PC-3 (cell line): ENCODE measurements at regions of chr4 and their contacts with region 1.

Region 1: DNA sequence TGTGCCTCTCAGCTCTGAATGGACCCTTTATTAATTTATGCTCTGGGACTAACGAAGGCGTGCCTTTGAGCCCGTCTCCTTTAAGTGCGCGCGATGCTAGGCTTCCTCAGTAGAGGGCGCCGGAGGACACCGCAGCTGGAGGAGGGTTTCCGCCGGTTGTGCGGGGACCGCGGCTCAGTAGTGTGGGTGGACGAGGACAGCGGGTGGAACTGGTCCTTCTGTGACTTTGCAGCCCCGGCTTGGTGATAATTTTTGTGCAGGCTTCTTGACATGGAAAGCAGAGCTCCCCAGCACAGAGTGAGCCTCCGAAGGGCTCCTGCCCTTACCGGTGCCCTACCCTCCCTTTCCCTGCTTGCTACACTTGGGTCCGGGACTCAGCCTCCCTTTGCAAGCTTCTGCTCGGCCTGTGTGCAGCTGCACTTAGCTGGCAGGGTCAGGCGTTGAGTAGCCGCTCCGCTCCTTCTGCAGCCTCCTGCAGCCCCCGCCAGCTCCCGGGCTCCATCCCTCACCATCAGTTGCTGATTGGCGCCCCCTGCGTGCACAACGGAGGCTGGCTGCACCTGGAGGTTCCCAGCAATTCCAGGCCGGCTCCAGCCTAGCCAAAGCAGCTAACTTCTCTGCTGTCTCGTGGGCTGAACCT is 26.8 kb upstream of the BOD1L1 start:
- DNase-seq: peak; percentile 77
- ATAC-seq: peak; percentile 86
- H3K4me3 ChIP-seq: peak overlapping the region; percentile 73
- H3K27ac ChIP-seq: peak overlapping the region; percentile 84
- H3K4me1 ChIP-seq: peaks cover 33% of the 10 kb centered on the region
- H3K27me3 ChIP-seq: no peaks in the 10 kb centered on the region
- CTCF ChIP-seq: peak; percentile 67

Region 2: DNA sequence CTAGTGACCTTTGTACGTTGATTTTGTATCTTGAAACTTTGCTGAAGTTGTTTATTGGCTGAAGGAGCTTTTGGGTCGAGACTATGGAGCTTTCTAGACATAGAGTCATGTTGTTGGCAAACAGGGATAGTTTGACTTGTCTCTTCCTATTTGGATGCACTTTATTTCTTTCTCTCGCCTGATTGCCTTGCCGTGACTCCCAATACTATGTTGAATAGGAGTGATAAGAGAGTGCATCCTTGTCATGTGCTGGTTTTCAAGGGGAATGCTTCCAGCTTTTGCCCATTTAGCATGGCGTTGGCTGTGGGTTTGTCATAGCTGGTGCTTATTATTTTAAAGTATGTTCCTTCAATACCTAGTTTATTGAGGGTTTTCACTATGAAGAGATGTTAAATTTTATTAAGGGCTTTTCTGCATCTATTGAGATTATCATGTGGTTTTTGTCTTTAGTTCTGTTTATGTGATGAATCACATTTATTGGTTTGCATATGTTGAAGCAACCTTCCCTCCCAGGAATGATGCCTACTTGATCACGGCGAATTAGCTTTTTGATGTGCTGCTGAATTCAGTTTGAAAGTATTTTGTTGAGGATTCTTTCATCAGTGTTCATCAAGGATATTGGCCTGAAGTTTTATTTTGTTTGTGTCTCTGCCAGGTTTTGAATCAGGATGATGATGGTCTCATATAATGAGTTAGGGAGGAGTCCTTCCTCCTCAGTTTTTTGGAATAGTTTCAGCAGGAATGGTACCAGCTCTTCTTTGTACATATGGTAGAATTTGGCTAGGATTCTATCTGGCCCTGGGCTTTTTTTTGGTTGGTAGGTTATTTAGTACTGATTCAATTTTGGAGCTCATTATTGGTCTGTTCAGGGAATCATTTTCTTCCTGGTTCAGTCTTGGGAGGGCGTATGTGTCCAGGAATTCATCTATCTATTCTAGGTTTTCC is 46.2 kb after region 1 on chr4:
- CTCF ChIA-PET with region 1: no interaction called
- POLR2A ChIA-PET with region 1: interaction called, 8 read pairs
- intact Hi-C with region 1: loop called (anchors 1 kb)
- DNase-seq: peak; percentile 92
- ATAC-seq: peak; percentile 46
- H3K4me3 ChIP-seq: peak overlapping the region; percentile 33; the same call in 1 of the 2 replicates
- H3K27ac ChIP-seq: peak overlapping the region; percentile 96
- H3K4me1 ChIP-seq: peaks cover 62% of the 10 kb centered on the region
- H3K27me3 ChIP-seq: no peaks in the 10 kb centered on the region
- CTCF ChIP-seq: no peak

Region 3: GRCh38 chr4:13907255-13907751 is 253.0 kb after region 1 on chr4:
- CTCF ChIA-PET with region 1: interaction called, 10 read pairs
- POLR2A ChIA-PET with region 1: no interaction called
- intact Hi-C with region 1: loop called (anchors 2 kb)
- DNase-seq: peak; percentile 91
- ATAC-seq: peak; percentile 95
- H3K4me3 ChIP-seq: 0 out of 2 replicates have a peak overlapping the region, but pooled peaks have one; percentile 18
- H3K27ac ChIP-seq: peak overlapping the region; percentile 99
- H3K4me1 ChIP-seq: peaks cover 51% of the 10 kb centered on the region
- H3K27me3 ChIP-seq: no peaks in the 10 kb centered on the region
- CTCF ChIP-seq: peak; percentile 72

Region 4: DNA sequence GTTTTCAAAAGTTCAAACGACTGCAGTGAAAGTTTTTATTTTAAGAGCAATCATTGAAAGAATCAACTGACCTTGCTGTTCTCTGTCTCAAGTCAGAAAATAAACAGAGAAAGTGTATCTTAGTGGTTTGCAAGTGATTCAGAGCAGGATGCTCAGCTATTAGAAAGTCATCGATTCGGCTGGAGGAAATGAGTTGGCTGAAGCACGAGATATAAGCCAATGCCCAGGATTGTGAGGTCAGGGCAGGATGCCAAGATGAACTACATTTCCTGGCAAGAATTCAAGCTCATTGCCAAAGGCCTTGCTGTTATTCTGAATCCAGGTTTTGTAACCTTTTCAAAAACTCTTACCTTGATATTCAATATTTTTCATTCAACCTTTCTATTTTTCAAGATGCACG is 514.6 kb after region 1 on chr4:
- CTCF ChIA-PET with region 1: no interaction called
- POLR2A ChIA-PET with region 1: no interaction called
- intact Hi-C with region 1: loop called (anchors 2 kb)
- DNase-seq: peak; percentile 97
- ATAC-seq: peak; percentile 87
- H3K4me3 ChIP-seq: peak overlapping the region; percentile 10; the same call in 1 of the 2 replicates
- H3K27ac ChIP-seq: peak overlapping the region; percentile 99
- H3K4me1 ChIP-seq: peaks cover 27% of the 10 kb centered on the region
- H3K27me3 ChIP-seq: no peaks in the 10 kb centered on the region
- CTCF ChIP-seq: no peak

Region 5: DNA sequence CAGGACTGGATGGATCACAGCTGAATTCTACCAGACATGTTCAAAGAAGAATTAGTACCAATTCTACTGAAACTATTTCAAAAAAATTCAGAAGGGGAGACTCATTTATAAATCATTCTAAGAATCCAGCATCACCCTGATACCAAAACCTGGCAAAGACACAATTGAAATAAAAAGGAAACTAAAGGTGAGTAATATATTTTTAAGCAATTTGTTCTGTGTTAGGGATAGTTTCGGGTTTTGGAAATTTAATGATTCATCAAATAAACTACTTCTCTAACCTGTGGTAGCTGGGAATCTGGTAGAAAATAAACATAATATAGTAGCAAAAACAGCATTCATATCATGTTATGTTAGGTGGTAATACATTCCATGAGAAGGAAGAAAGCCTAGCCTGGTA is 635.4 kb after region 1 on chr4:
- CTCF ChIA-PET with region 1: no interaction called
- POLR2A ChIA-PET with region 1: no interaction called
- intact Hi-C with region 1: loop called (anchors 10 kb)
- DNase-seq: peak; percentile 76
- ATAC-seq: peak; percentile 58
- H3K4me3 ChIP-seq: peak overlapping the region; percentile 10; the same call in 1 of the 2 replicates
- H3K27ac ChIP-seq: peak overlapping the region; percentile 87
- H3K4me1 ChIP-seq: peaks cover 16% of the 10 kb centered on the region
- H3K27me3 ChIP-seq: no peaks in the 10 kb centered on the region
- CTCF ChIP-seq: no peak

Region 6: GRCh38 chr4:15001869-15002658 is 1347.8 kb after region 1 on chr4 and contains the start of gene CPEB2:
- CTCF ChIA-PET with region 1: no interaction called
- POLR2A ChIA-PET with region 1: no interaction called
- intact Hi-C with region 1: loop called (anchors 10 kb)
- DNase-seq: peak; percentile 88
- ATAC-seq: peak; percentile 65
- H3K4me3 ChIP-seq: peak within 1 kb of the TSS; percentile 96
- H3K27ac ChIP-seq: peak within 1 kb of the TSS; percentile 83
- H3K4me1 ChIP-seq: peaks cover 17% of the 10 kb centered on the region; the same call in 1 of the 2 replicates
- H3K27me3 ChIP-seq: no peaks in the 10 kb centered on the region
- CTCF ChIP-seq: no peak
- total RNA-seq, gene CPEB2: 1.8 and 2.4 TPM in 2 replicates